ENCODE measurements at regions of chr9 and their contacts with region 1.

Region 1: GRCh38 chr9:114385412-114386181 is 2.2 kb downstream of the AKNA start:
- DNase-seq: peak; percentile 68 to 96 (median 93)
- ATAC-seq: peak; percentile 88
- H3K4me3 ChIP-seq: peak overlapping the region; percentile 63
- H3K4me3 Mint-ChIP-seq: peak overlapping the region; percentile 89 to 100 (median 96)
- H3K27ac ChIP-seq: peak overlapping the region; percentile 87
- H3K27ac Mint-ChIP-seq: peak overlapping the region; percentile 88 to 100 (median 96)
- H3K4me1 ChIP-seq: peaks cover 72 to 75% of the 10 kb centered on the region in 2 donors
- H3K4me1 Mint-ChIP-seq: peaks cover 61 to 77% (median 70%) of the 10 kb centered on the region in 7 donors
- H3K27me3 ChIP-seq: no peaks in the 10 kb centered on the region
- H3K27me3 Mint-ChIP-seq: no peaks in the 10 kb centered on the region

Region 2: GRCh38 chr9:113221003-113221799 is 1164.4 kb before region 1 on chr9 and contains the starts of genes FKBP15 and SLC31A1:
- CTCF ChIA-PET with region 1: no interaction called
- POLR2A ChIA-PET with region 1: no interaction called
- intact Hi-C with region 1: loop called in 1 of 2 experiments (anchors 10 kb)
- DNase-seq: peak; percentile 88 to 96 (median 96)
- ATAC-seq: peak; percentile 99
- H3K4me3 ChIP-seq: peak within 1 kb of the TSS; percentile 91
- H3K4me3 Mint-ChIP-seq: peak within 1 kb of the TSS; percentile 89 to 99 (median 94)
- H3K27ac ChIP-seq: peak within 1 kb of the TSS; percentile 94
- H3K27ac Mint-ChIP-seq: peak within 1 kb of the TSS; percentile 86 to 98 (median 94)
- H3K4me1 ChIP-seq: peaks cover 10 to 25% of the 10 kb centered on the region in 2 donors
- H3K4me1 Mint-ChIP-seq: peaks cover 15 to 58% (median 48%) of the 10 kb centered on the region in 7 donors
- H3K27me3 ChIP-seq: no peaks in the 10 kb centered on the region
- H3K27me3 Mint-ChIP-seq: no peaks in the 10 kb centered on the region
- total RNA-seq, gene FKBP15: 22.4 to 50.6 (median 33.4) TPM
- total RNA-seq, gene SLC31A1: 4.5 to 10.4 (median 4.7) TPM

Region 3: GRCh38 chr9:114339130-114339908 is 46.3 kb before region 1 on chr9:
- CTCF ChIA-PET with region 1: interaction called, 8 read pairs
- POLR2A ChIA-PET with region 1: interaction called, 978 read pairs
- intact Hi-C with region 1: loop called (anchors 1 kb)
- DNase-seq: peak in 8 of 9 donors; percentile 19 to 64 (median 50)
- ATAC-seq: peak; percentile 83
- H3K4me3 ChIP-seq: no peak overlapping the region
- H3K4me3 Mint-ChIP-seq: no peak overlapping the region
- H3K27ac ChIP-seq: peak overlapping the region; percentile 14
- H3K27ac Mint-ChIP-seq: peak overlapping the region in 6 of 9 donors; percentile 15 to 76 (median 67)
- H3K4me1 ChIP-seq: no peaks in the 10 kb centered on the region
- H3K4me1 Mint-ChIP-seq: peaks cover 8 to 37% (median 17%) of the 10 kb centered on the region in 7 donors
- H3K27me3 ChIP-seq: no peaks in the 10 kb centered on the region
- H3K27me3 Mint-ChIP-seq: no peaks in the 10 kb centered on the region

Region 4: DNA sequence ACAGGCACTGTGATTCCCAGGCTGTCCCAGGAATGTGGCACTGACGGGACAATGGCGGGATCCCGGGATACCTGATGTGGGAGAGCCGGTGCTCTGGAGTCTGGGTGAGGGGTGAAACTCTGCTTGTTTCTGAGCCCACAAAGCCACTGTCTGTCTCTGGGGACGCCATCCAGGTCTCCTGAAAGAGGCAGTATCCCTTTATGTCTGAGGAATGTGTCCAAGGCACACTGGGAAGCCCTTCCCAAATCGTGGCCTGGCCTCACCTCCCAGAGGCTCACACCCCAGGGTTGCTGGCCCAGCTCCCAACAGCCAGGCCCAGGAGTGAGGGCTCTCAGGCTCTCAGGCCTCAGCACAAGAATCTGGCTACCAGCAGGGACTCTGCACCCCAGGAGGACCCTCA is 28.8 kb before region 1 on chr9:
- CTCF ChIA-PET with region 1: interaction called, 13 read pairs
- POLR2A ChIA-PET with region 1: interaction called, 978 read pairs
- intact Hi-C with region 1: no loop called
- DNase-seq: no peak
- ATAC-seq: no peak
- H3K4me3 ChIP-seq: no peak overlapping the region
- H3K4me3 Mint-ChIP-seq: no peak overlapping the region
- H3K27ac ChIP-seq: peak overlapping the region; percentile 49
- H3K27ac Mint-ChIP-seq: peak overlapping the region in 7 of 9 donors; percentile 45 to 93 (median 86)
- H3K4me1 ChIP-seq: peaks cover 16 to 17% of the 10 kb centered on the region in 2 donors
- H3K4me1 Mint-ChIP-seq: peaks cover 29 to 67% (median 51%) of the 10 kb centered on the region in 7 donors
- H3K27me3 ChIP-seq: no peaks in the 10 kb centered on the region
- H3K27me3 Mint-ChIP-seq: no peaks in the 10 kb centered on the region

Region 5: GRCh38 chr9:114397848-114398605 is 12.4 kb after region 1 on chr9:
- CTCF ChIA-PET with region 1: interaction called, 26 read pairs
- POLR2A ChIA-PET with region 1: interaction called, 148 read pairs
- intact Hi-C with region 1: loop called (anchors 1 kb)
- DNase-seq: peak; percentile 91 to 96 (median 94)
- ATAC-seq: peak; percentile 94
- H3K4me3 ChIP-seq: peak overlapping the region; percentile 98
- H3K4me3 Mint-ChIP-seq: peak overlapping the region; percentile 86 to 99 (median 96)
- H3K27ac ChIP-seq: peak overlapping the region; percentile 97
- H3K27ac Mint-ChIP-seq: peak overlapping the region; percentile 88 to 99 (median 97)
- H3K4me1 ChIP-seq: peaks cover 26 to 44% of the 10 kb centered on the region in 2 donors
- H3K4me1 Mint-ChIP-seq: peaks cover 40 to 48% (median 46%) of the 10 kb centered on the region in 7 donors
- H3K27me3 ChIP-seq: no peaks in the 10 kb centered on the region
- H3K27me3 Mint-ChIP-seq: no peaks in the 10 kb centered on the region

Region 6: GRCh38 chr9:114505187-114506081 is 119.8 kb after region 1 on chr9 and contains the start of gene WHRN:
- CTCF ChIA-PET with region 1: interaction called, 3 read pairs
- POLR2A ChIA-PET with region 1: interaction called, 11 read pairs
- intact Hi-C with region 1: loop called in 1 of 2 experiments (anchors 1 kb)
- DNase-seq: peak; percentile 80 to 94 (median 89)
- ATAC-seq: peak; percentile 95
- H3K4me3 ChIP-seq: peak within 1 kb of the TSS; percentile 59
- H3K4me3 Mint-ChIP-seq: peak within 1 kb of the TSS; percentile 83 to 90 (median 88)
- H3K27ac ChIP-seq: peak within 1 kb of the TSS; percentile 57
- H3K27ac Mint-ChIP-seq: peak within 1 kb of the TSS; percentile 55 to 94 (median 87)
- H3K4me1 ChIP-seq: peaks cover 14 to 29% of the 10 kb centered on the region in 2 donors
- H3K4me1 Mint-ChIP-seq: peaks cover 5 to 26% (median 22%) of the 10 kb centered on the region in 7 donors
- H3K27me3 ChIP-seq: no peaks in the 10 kb centered on the region
- H3K27me3 Mint-ChIP-seq: peaks cover 0 to 86% (median 33%) of the 10 kb centered on the region in 5 donors
- total RNA-seq, gene WHRN: 1.1 to 24.0 (median 3.0) TPM

Region 7: DNA sequence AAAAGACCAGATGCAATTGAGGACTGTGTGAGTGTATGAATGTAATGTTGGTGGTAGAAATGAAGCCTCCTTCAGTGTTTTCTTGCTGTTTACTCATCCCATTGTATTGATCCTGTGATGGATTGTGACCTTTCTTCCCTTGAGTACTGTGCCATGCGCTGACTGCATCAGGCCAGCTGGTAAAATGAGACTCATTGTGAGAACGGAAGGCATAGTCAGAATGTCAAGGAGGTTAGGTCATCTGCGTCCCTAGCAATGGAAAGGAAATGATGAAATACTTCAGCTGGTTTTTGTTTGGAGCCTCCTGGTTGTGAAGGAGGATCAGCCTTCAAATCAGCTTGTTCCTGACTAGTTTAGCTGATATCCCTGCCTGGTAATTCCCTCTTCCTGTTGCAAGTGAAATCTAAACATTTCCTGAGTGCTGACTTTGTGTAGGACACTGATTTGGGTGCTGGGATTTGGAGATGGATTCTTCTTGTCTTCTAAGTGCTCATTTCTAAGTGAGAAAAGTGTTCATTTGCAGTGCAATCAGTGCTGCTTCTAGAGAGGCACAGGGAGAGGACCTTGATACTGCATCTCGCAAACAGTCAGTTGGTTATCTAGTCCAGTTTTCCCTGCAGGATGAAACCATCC is 509.3 kb after region 1 on chr9:
- CTCF ChIA-PET with region 1: no interaction called
- POLR2A ChIA-PET with region 1: no interaction called
- intact Hi-C with region 1: loop called in 1 of 2 experiments (anchors 5 kb)
- DNase-seq: no peak
- ATAC-seq: peak; percentile 27
- H3K4me3 ChIP-seq: no peak overlapping the region
- H3K4me3 Mint-ChIP-seq: peak overlapping the region in 7 of 10 donors; percentile 11 to 73 (median 34)
- H3K27ac ChIP-seq: no peak overlapping the region
- H3K27ac Mint-ChIP-seq: peak overlapping the region in 7 of 9 donors; percentile 24 to 87 (median 48)
- H3K4me1 ChIP-seq: peaks cover 56 to 73% of the 10 kb centered on the region in 2 donors
- H3K4me1 Mint-ChIP-seq: peaks cover 17 to 54% (median 32%) of the 10 kb centered on the region in 7 donors
- H3K27me3 ChIP-seq: no peaks in the 10 kb centered on the region
- H3K27me3 Mint-ChIP-seq: no peaks in the 10 kb centered on the region

Measured in naive thymus-derived CD4-positive, alpha-beta T cell (primary cell).